Vagina (tissue), 2 donors: ENCODE measurements at regions of chr20 and their contacts with region 1.

Region 1: DNA sequence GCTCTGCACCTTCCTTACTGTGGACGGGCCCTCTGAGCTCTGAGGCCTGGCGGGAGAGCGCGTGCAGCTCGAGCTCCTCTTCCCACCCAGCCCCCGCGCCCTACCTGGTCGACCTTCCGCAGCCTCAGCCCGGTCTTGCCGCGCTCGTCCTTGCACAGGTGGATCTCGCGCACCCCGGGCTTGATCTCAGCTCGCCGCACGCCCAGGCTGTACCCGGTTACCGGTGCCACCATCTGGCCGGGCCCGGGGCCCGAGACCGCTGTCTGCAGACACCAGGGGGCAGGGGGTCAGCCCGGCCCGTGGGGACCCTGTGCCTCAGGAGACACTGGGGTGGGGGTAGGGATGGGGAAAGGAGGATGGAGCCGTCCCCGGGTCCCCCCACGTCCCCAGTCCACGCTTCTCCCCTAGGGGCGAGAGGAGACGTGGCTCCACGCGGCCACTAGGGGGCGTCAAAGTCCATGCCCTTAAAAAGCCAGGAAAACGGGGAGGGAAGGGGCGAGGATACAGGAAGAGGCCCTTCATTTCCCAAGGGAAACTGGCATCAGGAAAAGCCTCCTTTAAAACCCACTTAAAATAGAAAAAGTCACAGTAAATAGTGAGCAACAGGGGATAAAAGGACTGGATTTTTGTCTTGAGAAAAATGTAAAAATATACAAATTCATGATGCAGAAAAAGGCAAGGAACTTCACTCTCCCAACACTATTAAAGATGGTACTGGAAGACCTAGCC is 15.5 kb downstream of the SDCBP2 start:
- DNase-seq: no peak
- H3K4me3 ChIP-seq: peak overlapping the region in 1 of 2 donors; percentile 46
- H3K27ac ChIP-seq: no peak overlapping the region
- H3K4me1 ChIP-seq: peaks cover 9% of the 10 kb centered on the region
- H3K27me3 ChIP-seq: no peaks in the 10 kb centered on the region
- CTCF ChIP-seq: peak; percentile 95 to 96 (median 95)
- POLR2A ChIP-seq: no peak

Region 2: DNA sequence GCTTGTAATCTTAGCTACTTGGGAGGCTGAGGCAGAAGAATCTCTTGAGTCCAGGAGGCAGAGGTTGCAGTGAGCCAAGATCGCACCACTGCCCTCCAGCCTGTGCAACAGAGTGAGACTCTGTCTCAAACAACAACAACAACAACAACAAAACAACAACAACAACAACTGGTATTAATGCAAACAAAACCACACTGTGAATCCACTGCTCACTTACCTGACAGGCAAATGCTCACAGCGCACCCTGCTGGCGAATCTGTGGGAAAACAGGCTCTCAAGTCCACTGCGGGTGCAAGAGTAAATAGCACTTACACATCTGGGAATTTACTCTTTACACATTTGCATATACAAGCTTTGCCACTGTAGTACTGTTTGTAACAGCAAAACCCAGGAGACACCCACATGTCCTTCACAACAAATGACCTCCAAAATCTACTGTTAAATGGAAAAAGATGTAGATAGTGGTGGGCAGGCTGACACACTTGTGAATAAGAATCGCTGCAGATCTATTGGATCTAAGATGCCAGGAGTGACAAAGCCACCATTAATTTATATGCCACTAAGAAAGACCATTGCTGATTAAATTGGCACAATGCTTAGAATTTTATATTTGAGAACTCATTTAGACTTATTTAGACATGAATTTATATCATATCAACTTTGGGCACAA is 124.0 kb after region 1 on chr20:
- intact Hi-C with region 1: loop called (anchors 1 kb)
- DNase-seq: no peak
- H3K4me3 ChIP-seq: no peak overlapping the region
- H3K27ac ChIP-seq: no peak overlapping the region
- H3K4me1 ChIP-seq: no peaks in the 10 kb centered on the region
- H3K27me3 ChIP-seq: no peaks in the 10 kb centered on the region
- CTCF ChIP-seq: peak; percentile 87 to 89 (median 88)
- POLR2A ChIP-seq: no peak

Region 3: GRCh38 chr20:1448081-1448620 is 134.8 kb after region 1 on chr20:
- intact Hi-C with region 1: loop called (anchors 5 kb)
- DNase-seq: no peak
- H3K4me3 ChIP-seq: no peak overlapping the region
- H3K27ac ChIP-seq: no peak overlapping the region
- H3K4me1 ChIP-seq: no peaks in the 10 kb centered on the region
- H3K27me3 ChIP-seq: no peaks in the 10 kb centered on the region
- CTCF ChIP-seq: no peak
- POLR2A ChIP-seq: no peak